Ascending aorta (tissue), 2 donors: ENCODE measurements at regions of chr2 and their contacts with region 1.

Region 1: DNA sequence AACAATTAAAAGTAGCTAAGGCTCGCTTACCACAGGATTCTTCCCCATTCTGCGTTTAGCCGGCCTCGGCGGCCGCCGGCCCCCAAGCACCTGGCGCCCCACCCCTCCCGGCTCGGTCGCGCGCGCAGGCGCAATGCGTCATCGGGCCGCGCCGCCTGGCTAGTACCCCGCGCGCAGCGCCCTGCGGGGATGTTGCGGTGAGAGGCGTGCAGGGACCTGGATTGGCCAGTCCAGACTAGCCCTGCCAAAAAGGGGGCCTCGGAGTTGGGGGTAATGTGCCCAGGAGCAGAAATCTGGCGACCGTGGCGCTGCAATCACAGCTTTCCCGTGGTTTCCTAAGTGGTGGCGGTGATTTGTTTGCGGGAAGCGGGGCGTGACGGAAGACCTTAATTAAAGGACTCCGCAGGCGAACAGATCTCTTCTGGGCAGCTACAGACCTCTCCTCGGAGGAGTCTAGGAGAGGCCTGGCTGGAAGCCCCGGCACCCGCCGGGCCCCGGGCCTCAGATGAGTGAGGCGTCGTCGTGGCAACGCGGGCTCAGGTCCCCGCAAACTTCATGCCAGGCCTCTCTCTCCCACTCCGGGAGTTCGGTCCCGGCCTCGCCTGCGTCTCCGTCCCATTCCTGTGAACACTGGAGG is 606 bp downstream of the TMEM237 start:
- DNase-seq: peak; percentile 34 to 89
- H3K4me3 ChIP-seq: peak overlapping the region; percentile 85 to 99
- H3K27ac ChIP-seq: peak overlapping the region; percentile 97 to 100
- H3K4me1 ChIP-seq: peaks cover 0 to 7% of the 10 kb centered on the region in 2 donors
- H3K27me3 ChIP-seq: no peaks in the 10 kb centered on the region
- CTCF ChIP-seq: no peak

Region 2: DNA sequence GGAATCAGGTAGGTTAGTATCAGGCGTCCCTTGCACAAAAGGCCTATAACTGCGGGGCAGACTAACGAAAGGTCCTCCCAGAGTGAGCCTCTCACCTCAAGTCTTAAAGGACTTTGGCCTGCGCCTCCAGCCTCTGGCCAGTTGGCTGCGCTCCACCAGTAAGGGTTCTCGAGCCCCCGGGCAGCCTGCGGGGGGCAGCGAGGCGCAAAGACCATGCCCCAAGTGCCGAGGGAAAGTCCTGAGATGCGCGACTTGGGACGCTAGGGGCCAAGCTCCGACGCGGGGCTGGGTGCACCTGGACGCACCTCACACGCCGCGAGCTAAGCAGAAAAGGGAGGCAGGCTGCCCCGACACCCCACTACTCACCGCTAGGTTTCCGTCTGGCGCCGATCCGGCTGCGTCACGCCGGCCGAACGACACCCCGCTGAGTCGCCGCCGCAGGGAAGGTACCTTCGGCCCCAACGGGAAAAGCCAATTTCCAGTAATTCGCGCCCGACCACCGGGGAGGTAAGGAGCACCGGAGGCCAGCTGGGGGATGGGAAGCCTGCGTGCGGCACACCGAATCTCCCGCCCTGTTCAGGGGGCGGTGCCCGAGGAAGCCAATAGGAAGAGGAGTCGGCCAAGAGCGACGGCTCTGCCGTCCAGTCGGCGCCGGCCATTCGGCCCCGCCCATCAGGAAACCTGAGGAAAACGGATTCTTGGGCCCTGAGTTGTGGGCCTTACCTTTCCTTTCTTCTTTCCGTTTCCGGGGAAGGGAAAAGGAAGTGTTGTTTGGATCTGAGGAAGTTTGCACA is 679.4 kb before region 1 on chr2 and contains the start of gene ORC2:
- intact Hi-C with region 1: loop called (anchors 5 kb)
- DNase-seq: peak; percentile 78 to 97
- H3K4me3 ChIP-seq: peak within 1 kb of the TSS; percentile 85 to 86
- H3K27ac ChIP-seq: peak within 1 kb of the TSS; percentile 71 to 82
- H3K4me1 ChIP-seq: peaks cover 0 to 8% of the 10 kb centered on the region in 2 donors
- H3K27me3 ChIP-seq: no peaks in the 10 kb centered on the region
- CTCF ChIP-seq: peak; percentile 44 to 73 (median 50)
- total RNA-seq, gene ORC2: 5.2 TPM

Region 3: DNA sequence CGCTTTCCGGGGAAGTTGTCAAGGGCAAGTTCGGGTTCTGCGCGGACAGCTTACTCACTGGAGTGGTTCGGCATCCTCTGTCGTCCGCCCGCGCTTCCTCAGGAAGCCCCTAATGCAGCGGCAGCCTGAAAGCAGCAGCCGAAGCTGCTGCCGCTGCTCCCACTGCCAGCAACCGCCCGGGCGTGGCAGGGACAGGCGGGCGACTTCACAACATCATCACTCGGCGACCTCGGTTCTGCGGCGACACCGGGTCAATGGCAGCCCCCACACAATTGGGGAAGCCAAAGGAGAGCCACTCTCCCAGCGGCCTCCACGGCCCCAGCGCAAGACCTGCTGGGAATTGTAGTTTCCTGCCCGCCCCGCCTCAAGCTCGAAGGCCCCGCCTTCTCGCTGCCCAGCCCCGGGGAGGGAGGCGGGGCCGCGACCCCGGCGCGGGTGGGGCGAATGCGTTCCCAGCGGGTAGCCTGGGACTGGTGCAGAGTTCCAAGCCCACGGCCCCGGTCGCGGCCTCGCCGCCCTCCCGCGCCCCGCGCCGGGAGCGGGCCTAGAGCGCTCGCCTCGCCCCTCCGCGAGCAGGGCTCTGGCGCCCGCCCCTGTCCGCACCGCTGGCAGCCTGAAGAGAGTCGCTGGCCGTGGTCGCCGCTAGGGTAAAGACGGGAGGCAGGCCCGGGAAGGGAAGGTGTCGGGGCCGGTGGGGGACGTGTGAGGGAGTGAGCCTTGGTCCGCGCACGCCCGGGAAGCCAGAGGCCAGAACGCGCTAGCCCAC is 191.2 kb before region 1 on chr2 and contains the starts of genes STRADB and TRAK2:
- intact Hi-C with region 1: loop called (anchors 10 kb)
- DNase-seq: peak; percentile 85 to 97
- H3K4me3 ChIP-seq: peak within 1 kb of the TSS; percentile 88 to 90
- H3K27ac ChIP-seq: peak within 1 kb of the TSS; percentile 80 to 89
- H3K4me1 ChIP-seq: peaks cover 10 to 28% of the 10 kb centered on the region in 2 donors
- H3K27me3 ChIP-seq: no peaks in the 10 kb centered on the region
- CTCF ChIP-seq: peak; percentile 18 to 31 (median 20)
- total RNA-seq, gene STRADB: 22.8 TPM
- total RNA-seq, gene TRAK2: 40.3 TPM

Region 4: DNA sequence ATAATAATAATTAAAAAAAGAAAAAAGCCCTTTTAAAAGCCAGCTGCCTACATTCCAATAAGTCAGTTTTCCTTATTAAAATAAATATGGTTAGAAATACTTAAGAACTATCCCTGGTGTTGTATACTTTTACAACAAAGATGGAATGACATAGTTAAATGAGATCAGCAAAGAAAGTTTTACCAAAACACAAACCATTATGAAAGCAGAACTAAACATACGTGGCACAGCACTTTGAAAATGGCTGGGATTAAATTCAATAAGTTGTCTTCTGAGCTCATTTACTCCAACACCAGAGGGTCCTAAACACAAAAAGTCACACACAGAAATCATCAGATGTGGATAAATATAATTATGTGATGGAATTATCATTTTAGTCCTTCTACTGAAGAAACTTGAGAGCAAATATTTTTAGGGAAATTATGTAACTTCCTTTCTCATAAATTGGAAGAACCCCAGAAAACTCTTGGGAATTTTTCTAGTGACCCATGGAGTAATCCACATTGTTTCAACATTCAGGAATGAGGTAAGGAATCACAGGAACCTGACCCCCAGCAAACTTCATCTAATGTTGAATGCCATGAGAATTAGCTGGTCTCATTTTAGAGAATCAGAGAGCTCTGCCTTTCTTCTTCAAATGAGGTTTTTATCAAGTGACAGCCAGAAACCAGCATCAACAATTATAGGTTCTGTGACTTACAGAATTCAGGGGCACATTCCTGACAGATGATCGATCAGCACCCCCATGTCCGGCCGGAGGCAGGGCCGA is 12.1 kb after region 1 on chr2:
- intact Hi-C with region 1: loop called (anchors 1 kb)
- DNase-seq: no peak
- H3K4me3 ChIP-seq: no peak overlapping the region
- H3K27ac ChIP-seq: peak overlapping the region; percentile 2 to 54
- H3K4me1 ChIP-seq: no peaks in the 10 kb centered on the region
- H3K27me3 ChIP-seq: no peaks in the 10 kb centered on the region
- CTCF ChIP-seq: no peak

Region 5: DNA sequence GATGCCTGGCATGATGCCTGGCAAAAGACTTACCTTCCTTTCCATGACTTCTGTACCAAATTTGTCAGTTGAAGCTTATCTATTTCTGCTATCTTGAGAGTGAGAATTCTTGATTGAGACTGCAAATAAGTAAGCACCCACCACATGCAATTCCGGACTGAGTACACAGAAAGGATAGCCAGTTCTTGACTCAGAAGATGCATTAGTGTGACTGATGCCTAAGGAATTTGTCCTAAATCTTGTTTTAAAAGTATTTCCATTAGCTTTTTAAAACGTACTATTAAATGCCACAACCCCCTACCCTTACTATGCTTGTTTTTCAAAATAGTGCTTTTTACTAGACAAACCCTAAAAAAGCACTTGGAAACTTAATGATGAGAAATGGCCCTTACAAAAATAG is 55.2 kb after region 1 on chr2:
- intact Hi-C with region 1: loop called (anchors 2 kb)
- DNase-seq: no peak
- H3K4me3 ChIP-seq: no peak overlapping the region
- H3K27ac ChIP-seq: peak overlapping the region; percentile 51 to 56
- H3K4me1 ChIP-seq: peaks cover 2 to 6% of the 10 kb centered on the region in 2 donors
- H3K27me3 ChIP-seq: no peaks in the 10 kb centered on the region
- CTCF ChIP-seq: no peak

Region 6: GRCh38 chr2:201780674-201781581 is 138.2 kb after region 1 on chr2 and contains the start of gene ALS2:
- intact Hi-C with region 1: loop called (anchors 5 kb)
- DNase-seq: peak; percentile 84 to 99
- H3K4me3 ChIP-seq: peak within 1 kb of the TSS; percentile 67 to 85
- H3K27ac ChIP-seq: peak within 1 kb of the TSS; percentile 84 to 92
- H3K4me1 ChIP-seq: peaks cover 0 to 7% of the 10 kb centered on the region in 2 donors
- H3K27me3 ChIP-seq: no peaks in the 10 kb centered on the region
- CTCF ChIP-seq: no peak
- total RNA-seq, gene ALS2: 6.5 TPM